ENCODE measurements at regions of chr2 and their contacts with region 1.

Region 1: DNA sequence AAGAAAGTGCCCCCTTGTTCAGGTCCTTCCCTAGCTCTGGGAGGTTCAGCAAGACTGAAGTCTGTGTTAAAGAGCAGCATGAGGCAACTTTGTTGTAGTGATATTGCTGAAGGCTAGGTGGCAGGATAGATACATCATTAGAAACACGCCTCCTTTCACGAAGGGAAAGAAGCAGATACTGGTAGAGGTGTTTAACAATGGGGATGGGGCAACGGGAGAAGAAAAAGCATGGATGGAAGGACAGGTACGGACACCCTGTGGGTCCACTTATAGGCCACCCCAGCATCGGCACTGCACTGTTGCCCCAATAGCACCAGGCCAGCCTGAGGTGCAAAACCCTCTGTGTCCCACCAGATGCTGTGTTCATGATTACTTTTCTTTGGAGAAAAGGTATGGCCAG is 3.5 kb upstream of the IGFBP5 start:
- DNase-seq: peak; percentile 74
- ATAC-seq: peak; percentile 68
- H3K4me3 ChIP-seq: no peak overlapping the region
- H3K27ac ChIP-seq: no peak overlapping the region
- H3K4me1 ChIP-seq: peaks cover 35% of the 10 kb centered on the region
- H3K27me3 ChIP-seq: no peaks in the 10 kb centered on the region
- CTCF ChIP-seq: peak; percentile 86

Region 2: GRCh38 chr2:217166241-217166850 is 467.5 kb after region 1 on chr2:
- CTCF ChIA-PET with region 1: no interaction called
- POLR2A ChIA-PET with region 1: no interaction called
- intact Hi-C with region 1: loop called (anchors 5 kb)
- DNase-seq: peak; percentile 65
- ATAC-seq: no peak; the same call in 1 of the 2 replicates
- H3K4me3 ChIP-seq: no peak overlapping the region
- H3K27ac ChIP-seq: no peak overlapping the region
- H3K4me1 ChIP-seq: peaks cover 27% of the 10 kb centered on the region
- H3K27me3 ChIP-seq: no peaks in the 10 kb centered on the region
- CTCF ChIP-seq: peak; percentile 79

Region 3: GRCh38 chr2:217289877-217290279 is 591.0 kb after region 1 on chr2:
- CTCF ChIA-PET with region 1: no interaction called
- POLR2A ChIA-PET with region 1: no interaction called
- intact Hi-C with region 1: loop called (anchors 10 kb)
- DNase-seq: peak; percentile 74
- ATAC-seq: peak; percentile 69
- H3K4me3 ChIP-seq: no peak overlapping the region
- H3K27ac ChIP-seq: 0 out of 2 replicates have a peak overlapping the region, but pooled peaks have one; percentile 9
- H3K4me1 ChIP-seq: peaks cover 37% of the 10 kb centered on the region
- H3K27me3 ChIP-seq: no peaks in the 10 kb centered on the region
- CTCF ChIP-seq: no peak

Region 4: DNA sequence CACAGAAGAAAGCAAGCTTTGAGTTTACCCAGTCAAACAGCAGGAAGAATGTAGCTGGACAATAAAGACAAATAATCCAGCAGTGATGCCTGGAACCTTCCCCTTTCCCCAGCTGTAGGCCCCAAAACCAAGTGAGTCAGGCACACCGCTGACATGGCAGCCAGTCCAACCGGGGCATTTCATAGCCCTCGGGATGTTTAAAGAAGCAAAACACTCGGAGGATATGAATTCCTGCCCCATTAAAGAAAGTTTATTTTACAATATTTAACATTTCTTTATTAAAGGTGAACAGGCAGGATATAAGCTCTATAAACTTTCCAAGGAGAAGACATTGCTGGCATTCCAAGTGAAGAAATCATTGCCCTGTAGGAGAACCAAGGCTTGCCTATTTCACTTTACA is 668.6 kb after region 1 on chr2:
- CTCF ChIA-PET with region 1: no interaction called
- POLR2A ChIA-PET with region 1: no interaction called
- intact Hi-C with region 1: loop called (anchors 5 kb)
- DNase-seq: peak; percentile 90
- ATAC-seq: peak; percentile 79
- H3K4me3 ChIP-seq: no peak overlapping the region
- H3K27ac ChIP-seq: peak overlapping the region; percentile 94
- H3K4me1 ChIP-seq: peaks cover 62% of the 10 kb centered on the region
- H3K27me3 ChIP-seq: no peaks in the 10 kb centered on the region
- CTCF ChIP-seq: no peak

Region 5: GRCh38 chr2:217798743-217799562 is 1100.1 kb after region 1 on chr2:
- CTCF ChIA-PET with region 1: interaction called, 10 read pairs
- POLR2A ChIA-PET with region 1: no interaction called
- intact Hi-C with region 1: no loop called
- DNase-seq: no peak
- ATAC-seq: no peak
- H3K4me3 ChIP-seq: no peak overlapping the region
- H3K27ac ChIP-seq: no peak overlapping the region
- H3K4me1 ChIP-seq: no peaks in the 10 kb centered on the region
- H3K27me3 ChIP-seq: no peaks in the 10 kb centered on the region
- CTCF ChIP-seq: no peak

Measured in PC-3 (cell line).